Activated B cell treated with CpG ODN at 0.5 μM for 24 hours (primary cell): ENCODE measurements at regions of chr1 and their contacts with region 1.

Region 1: DNA sequence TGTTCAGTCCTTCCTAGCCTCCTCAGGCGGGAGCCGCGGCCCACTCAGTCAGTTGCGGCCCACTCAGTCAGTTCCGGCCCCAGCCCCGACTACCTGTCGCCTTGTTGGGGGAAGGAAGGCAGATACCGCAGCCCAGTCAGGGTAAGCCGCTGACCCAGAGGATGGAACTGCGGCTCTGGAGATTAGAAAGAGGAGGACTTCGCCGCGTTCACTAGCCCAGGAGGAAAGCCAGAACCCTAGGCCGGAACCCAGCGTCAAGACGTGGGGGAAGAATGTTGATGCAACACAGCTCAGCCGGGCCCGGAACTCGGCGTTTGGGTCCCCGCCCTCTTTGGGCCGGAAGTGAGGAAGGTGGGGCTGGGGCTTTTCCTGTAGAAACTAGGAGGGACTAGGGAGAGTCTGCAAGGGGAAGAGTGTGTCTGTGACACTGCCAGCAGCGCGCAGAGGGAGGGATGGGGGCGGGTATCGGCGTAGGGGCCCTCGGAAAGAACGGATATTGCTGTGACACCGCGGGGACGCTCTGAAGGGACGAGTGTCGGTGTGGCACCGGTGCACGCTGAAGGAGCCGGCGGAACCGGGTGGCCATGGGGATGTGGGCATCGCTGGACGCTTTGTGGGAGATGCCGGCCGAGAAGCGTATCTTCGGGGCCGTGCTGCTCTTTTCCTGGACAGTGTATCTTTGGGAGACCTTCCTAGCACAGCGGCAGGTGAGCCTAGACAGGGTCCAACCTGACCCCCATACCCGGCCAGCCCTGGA is at the start of gene ZMPSTE24:
- DNase-seq: peak; percentile 89
- ATAC-seq: peak; percentile 95
- H3K4me3 Mint-ChIP-seq: peak within 1 kb of the TSS; percentile 96
- H3K27ac Mint-ChIP-seq: peak within 1 kb of the TSS; percentile 99
- H3K4me1 Mint-ChIP-seq: peaks cover 38% of the 10 kb centered on the region
- H3K27me3 Mint-ChIP-seq: no peaks in the 10 kb centered on the region
- CTCF ChIP-seq: no peak
- total RNA-seq, gene ZMPSTE24: 17.6 and 18.6 TPM in 2 replicates

Region 2: GRCh38 chr1:39230261-39231190 is 1027.3 kb before region 1 on chr1:
- CTCF ChIA-PET with region 1: no interaction called
- POLR2A ChIA-PET with region 1: no interaction called
- intact Hi-C with region 1: no loop called
- DNase-seq: peak; percentile 24
- ATAC-seq: peak; percentile 86
- H3K4me3 Mint-ChIP-seq: peak overlapping the region; percentile 36
- H3K27ac Mint-ChIP-seq: peak overlapping the region; percentile 85
- H3K4me1 Mint-ChIP-seq: peaks cover 47% of the 10 kb centered on the region
- H3K27me3 Mint-ChIP-seq: no peaks in the 10 kb centered on the region
- CTCF ChIP-seq: no peak

Region 3: DNA sequence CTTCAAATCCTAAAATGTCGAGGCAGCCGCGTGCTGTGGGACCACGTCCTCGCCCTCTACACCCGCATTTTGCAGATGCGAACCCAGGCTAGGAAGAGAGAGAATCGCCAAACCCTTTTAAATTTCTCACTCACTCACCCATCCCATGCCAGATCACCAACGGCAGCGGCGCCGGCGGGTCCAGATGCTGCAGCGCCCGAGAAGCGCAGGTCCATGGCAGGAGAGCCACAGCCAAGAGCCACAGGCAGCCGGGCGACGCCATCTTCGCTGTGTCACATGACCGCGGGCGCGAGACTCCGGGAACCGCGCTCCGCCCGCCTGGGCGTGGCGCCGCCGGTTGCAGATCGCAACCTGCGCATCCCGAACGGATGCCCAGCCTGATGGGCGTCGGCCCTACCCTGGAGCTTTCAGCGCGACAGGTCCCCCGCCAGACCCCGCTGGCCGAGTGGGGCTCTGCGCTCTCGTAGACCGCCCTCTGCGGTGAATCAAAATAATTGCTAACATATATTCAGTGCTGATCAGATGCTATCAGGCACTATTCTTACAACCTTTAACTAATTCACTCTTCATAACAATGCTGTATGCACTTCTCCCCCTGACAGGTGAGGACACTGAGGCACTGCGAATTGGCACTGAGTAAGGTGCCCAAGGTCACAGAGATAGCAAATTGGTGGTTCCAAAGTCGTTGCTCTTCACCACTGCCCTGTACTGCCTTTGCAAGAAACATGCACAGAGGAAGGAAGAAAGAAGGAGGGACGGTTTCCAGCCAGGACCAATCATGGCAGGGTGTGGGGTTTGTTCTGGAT is 160.7 kb before region 1 on chr1 and contains the start of gene PPT1:
- CTCF ChIA-PET with region 1: no interaction called
- POLR2A ChIA-PET with region 1: no interaction called
- intact Hi-C with region 1: loop called (anchors 2 kb)
- DNase-seq: peak; percentile 69
- ATAC-seq: peak; percentile 86
- H3K4me3 Mint-ChIP-seq: peak within 1 kb of the TSS; percentile 94
- H3K27ac Mint-ChIP-seq: peak within 1 kb of the TSS; percentile 92
- H3K4me1 Mint-ChIP-seq: peaks cover 18% of the 10 kb centered on the region
- H3K27me3 Mint-ChIP-seq: peaks cover 5% of the 10 kb centered on the region
- CTCF ChIP-seq: no peak
- total RNA-seq, gene PPT1: 41.8 and 43.5 TPM in 2 replicates

Region 4: GRCh38 chr1:40161125-40161887 is 96.6 kb before region 1 on chr1 and contains the start of gene RLF:
- CTCF ChIA-PET with region 1: no interaction called
- POLR2A ChIA-PET with region 1: interaction called, 9 read pairs
- intact Hi-C with region 1: loop called (anchors 1 kb)
- DNase-seq: peak; percentile 94
- ATAC-seq: peak; percentile 96
- H3K4me3 Mint-ChIP-seq: no peak within 1 kb of the TSS
- H3K27ac Mint-ChIP-seq: no peak within 1 kb of the TSS
- H3K4me1 Mint-ChIP-seq: peaks cover 22% of the 10 kb centered on the region
- H3K27me3 Mint-ChIP-seq: no peaks in the 10 kb centered on the region
- CTCF ChIP-seq: no peak
- total RNA-seq, gene RLF: 18.1 and 19.2 TPM in 2 replicates

Region 5: GRCh38 chr1:40232444-40232843 is 25.4 kb before region 1 on chr1:
- CTCF ChIA-PET with region 1: no interaction called
- POLR2A ChIA-PET with region 1: interaction called, 3 read pairs
- intact Hi-C with region 1: loop called (anchors 2 kb)
- DNase-seq: no peak
- ATAC-seq: peak; percentile 86
- H3K4me3 Mint-ChIP-seq: no peak overlapping the region
- H3K27ac Mint-ChIP-seq: peak overlapping the region; percentile 24
- H3K4me1 Mint-ChIP-seq: peaks cover 11% of the 10 kb centered on the region
- H3K27me3 Mint-ChIP-seq: no peaks in the 10 kb centered on the region
- CTCF ChIP-seq: no peak

Region 6: GRCh38 chr1:40307186-40307585 is 49.3 kb after region 1 on chr1:
- CTCF ChIA-PET with region 1: no interaction called
- POLR2A ChIA-PET with region 1: no interaction called
- intact Hi-C with region 1: no loop called
- DNase-seq: no peak
- ATAC-seq: no peak
- H3K4me3 Mint-ChIP-seq: no peak overlapping the region
- H3K27ac Mint-ChIP-seq: no peak overlapping the region
- H3K4me1 Mint-ChIP-seq: peaks cover 8% of the 10 kb centered on the region
- H3K27me3 Mint-ChIP-seq: no peaks in the 10 kb centered on the region
- CTCF ChIP-seq: no peak

Region 7: DNA sequence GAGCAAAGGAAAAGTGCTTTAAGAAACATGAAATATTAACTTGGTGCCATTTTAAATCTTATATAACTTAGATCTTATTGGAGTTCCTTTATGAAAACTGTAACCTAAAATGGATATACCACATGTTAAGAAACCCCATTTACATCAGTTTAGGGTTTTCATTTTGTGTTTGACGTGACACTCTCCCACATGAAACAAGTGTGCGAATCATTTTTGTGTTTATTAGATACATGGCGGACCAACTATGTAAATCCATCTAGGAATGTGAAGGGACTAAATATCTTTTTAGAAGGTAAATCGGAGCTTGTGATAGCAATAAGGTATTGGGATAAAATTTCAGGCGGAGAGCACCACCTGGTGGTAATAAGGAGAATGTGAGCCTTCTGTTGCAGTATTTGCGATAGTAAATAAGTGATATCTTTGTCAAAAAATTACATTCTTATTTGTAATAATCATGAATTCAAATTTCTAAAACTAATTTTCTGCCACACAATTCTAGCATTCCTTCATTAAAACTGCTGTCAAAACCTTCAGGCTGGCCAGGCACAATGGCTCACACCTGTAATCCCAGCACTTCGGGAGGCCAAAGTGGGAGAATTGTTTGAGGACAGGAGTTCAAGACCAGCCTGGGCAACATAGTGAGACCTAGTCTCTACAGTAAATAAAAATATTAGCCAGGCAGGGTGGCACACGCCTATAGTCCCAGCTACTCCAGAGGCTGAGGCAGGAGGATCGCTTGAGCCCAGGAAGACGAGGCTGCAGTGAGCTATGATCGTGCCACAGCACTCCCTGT is 147.0 kb after region 1 on chr1:
- CTCF ChIA-PET with region 1: interaction called, 4 read pairs
- POLR2A ChIA-PET with region 1: no interaction called
- intact Hi-C with region 1: loop called (anchors 5 kb)
- DNase-seq: no peak
- ATAC-seq: no peak
- H3K4me3 Mint-ChIP-seq: peak overlapping the region; percentile 56
- H3K27ac Mint-ChIP-seq: peak overlapping the region; percentile 84
- H3K4me1 Mint-ChIP-seq: peaks cover 62% of the 10 kb centered on the region
- H3K27me3 Mint-ChIP-seq: no peaks in the 10 kb centered on the region
- CTCF ChIP-seq: peak; percentile 86

Region 8: GRCh38 chr1:40531381-40532061 is 273.7 kb after region 1 on chr1 and contains the start of gene ZNF684:
- CTCF ChIA-PET with region 1: no interaction called
- POLR2A ChIA-PET with region 1: no interaction called
- intact Hi-C with region 1: loop called (anchors 1 kb)
- DNase-seq: peak; percentile 65
- ATAC-seq: peak; percentile 98
- H3K4me3 Mint-ChIP-seq: peak within 1 kb of the TSS; percentile 97
- H3K27ac Mint-ChIP-seq: peak within 1 kb of the TSS; percentile 92
- H3K4me1 Mint-ChIP-seq: peaks cover 29% of the 10 kb centered on the region
- H3K27me3 Mint-ChIP-seq: peaks cover 2% of the 10 kb centered on the region
- CTCF ChIP-seq: no peak
- total RNA-seq, gene ZNF684: 5.0 and 5.4 TPM in 2 replicates